ENCODE measurements at regions of chr16 and their contacts with region 1.

Region 1: GRCh38 chr16:85844786-85845185 is 45.3 kb downstream of the COX4I1 start:
- DNase-seq: no peak
- ATAC-seq: peak; percentile 69
- H3K4me3 Mint-ChIP-seq: no peak overlapping the region
- H3K27ac Mint-ChIP-seq: peak overlapping the region; percentile 19
- H3K4me1 Mint-ChIP-seq: peaks cover 21% of the 10 kb centered on the region
- H3K27me3 Mint-ChIP-seq: peaks cover 7% of the 10 kb centered on the region
- CTCF ChIP-seq: no peak

Region 2: GRCh38 chr16:85860413-85861094 is 15.8 kb after region 1 on chr16:
- CTCF ChIA-PET with region 1: no interaction called
- POLR2A ChIA-PET with region 1: no interaction called
- intact Hi-C with region 1: loop called (anchors 2 kb)
- DNase-seq: no peak
- ATAC-seq: peak; percentile 89
- H3K4me3 Mint-ChIP-seq: no peak overlapping the region
- H3K27ac Mint-ChIP-seq: peak overlapping the region; percentile 24
- H3K4me1 Mint-ChIP-seq: peaks cover 47% of the 10 kb centered on the region
- H3K27me3 Mint-ChIP-seq: no peaks in the 10 kb centered on the region
- CTCF ChIP-seq: no peak

Region 3: GRCh38 chr16:85923153-85924021 is 78.6 kb after region 1 on chr16:
- CTCF ChIA-PET with region 1: no interaction called
- POLR2A ChIA-PET with region 1: no interaction called
- intact Hi-C with region 1: no loop called
- DNase-seq: no peak
- ATAC-seq: no peak
- H3K4me3 Mint-ChIP-seq: no peak overlapping the region
- H3K27ac Mint-ChIP-seq: peak overlapping the region; percentile 50
- H3K4me1 Mint-ChIP-seq: peaks cover 59% of the 10 kb centered on the region
- H3K27me3 Mint-ChIP-seq: no peaks in the 10 kb centered on the region
- CTCF ChIP-seq: no peak

Region 4: DNA sequence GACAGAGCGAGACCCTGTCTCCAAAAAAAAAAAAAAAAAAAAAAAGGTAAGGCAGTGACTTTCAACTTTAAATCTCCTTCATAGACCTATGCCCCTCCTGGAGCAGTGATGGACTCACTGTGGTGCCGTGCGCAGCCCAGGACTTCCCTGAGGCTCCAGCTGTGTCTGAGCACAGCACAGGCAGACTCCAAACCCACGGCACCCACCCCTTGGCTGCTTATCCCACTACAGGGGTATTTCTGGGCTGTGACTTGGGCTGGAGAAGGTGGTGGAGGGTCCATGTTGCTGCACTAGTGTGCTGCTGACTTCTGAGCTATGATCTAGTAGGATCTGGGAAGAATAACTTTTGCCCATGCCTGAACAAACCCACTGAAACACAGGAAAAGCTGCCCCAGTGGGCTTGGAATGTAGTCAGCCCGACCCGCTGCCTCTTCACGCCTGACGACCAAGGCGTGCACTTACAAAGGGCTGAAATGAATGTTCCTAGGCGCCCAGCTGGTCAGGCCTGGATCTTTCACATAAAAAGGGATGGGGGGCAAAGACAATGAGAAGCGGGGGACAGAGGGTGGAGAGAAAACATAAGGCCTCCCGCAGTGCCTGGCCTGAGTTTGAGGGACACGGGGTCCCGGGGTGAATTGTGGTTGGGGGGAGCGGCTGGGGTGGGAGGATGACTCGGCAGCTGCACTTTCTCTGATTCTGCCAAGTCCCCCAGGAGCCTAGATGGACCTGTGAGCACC is 137.2 kb after region 1 on chr16:
- CTCF ChIA-PET with region 1: interaction called, 3 read pairs
- POLR2A ChIA-PET with region 1: interaction called, 10 read pairs
- intact Hi-C with region 1: no loop called
- DNase-seq: no peak
- ATAC-seq: no peak
- H3K4me3 Mint-ChIP-seq: peak overlapping the region; percentile 25
- H3K27ac Mint-ChIP-seq: peak overlapping the region; percentile 50
- H3K4me1 Mint-ChIP-seq: peaks cover 78% of the 10 kb centered on the region
- H3K27me3 Mint-ChIP-seq: no peaks in the 10 kb centered on the region
- CTCF ChIP-seq: no peak

Region 5: DNA sequence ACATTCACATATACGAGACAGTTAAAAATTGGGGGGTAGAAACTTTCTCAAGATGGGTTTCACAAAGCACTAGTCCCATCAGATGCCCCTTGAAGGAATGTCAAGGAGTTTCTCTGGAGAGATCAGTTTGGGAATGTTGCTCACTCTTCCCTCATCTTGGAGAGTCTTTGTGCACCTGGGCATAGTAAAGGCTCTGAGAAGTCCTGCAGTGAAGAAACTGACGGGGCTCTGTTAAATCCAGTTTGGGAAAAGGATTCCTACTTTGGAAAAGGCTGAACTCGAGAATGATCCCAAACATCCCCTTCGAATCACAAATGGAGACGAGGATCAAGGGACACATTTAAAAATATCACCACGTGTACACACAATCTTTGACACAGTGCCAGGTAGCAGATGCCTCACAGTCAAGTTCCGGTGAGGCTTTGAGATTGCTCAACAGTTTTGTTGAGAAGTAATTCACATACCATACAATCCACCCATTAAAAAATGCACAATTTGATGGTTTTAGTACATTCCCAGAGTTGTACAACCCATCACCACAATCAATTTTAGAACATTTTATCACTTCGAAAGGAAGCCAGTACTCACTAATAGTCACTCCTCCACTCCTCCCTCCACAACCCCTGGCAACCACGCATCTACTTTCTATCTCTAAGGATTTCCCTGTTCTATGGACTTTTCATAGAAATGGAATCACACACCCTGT is 462.2 kb after region 1 on chr16:
- CTCF ChIA-PET with region 1: no interaction called
- POLR2A ChIA-PET with region 1: no interaction called
- intact Hi-C with region 1: no loop called
- DNase-seq: no peak
- ATAC-seq: no peak
- H3K4me3 Mint-ChIP-seq: no peak overlapping the region
- H3K27ac Mint-ChIP-seq: no peak overlapping the region
- H3K4me1 Mint-ChIP-seq: no peaks in the 10 kb centered on the region
- H3K27me3 Mint-ChIP-seq: peaks cover 9% of the 10 kb centered on the region
- CTCF ChIP-seq: no peak